ENCODE measurements at regions of chr2 and their contacts with region 1.

Region 1: DNA sequence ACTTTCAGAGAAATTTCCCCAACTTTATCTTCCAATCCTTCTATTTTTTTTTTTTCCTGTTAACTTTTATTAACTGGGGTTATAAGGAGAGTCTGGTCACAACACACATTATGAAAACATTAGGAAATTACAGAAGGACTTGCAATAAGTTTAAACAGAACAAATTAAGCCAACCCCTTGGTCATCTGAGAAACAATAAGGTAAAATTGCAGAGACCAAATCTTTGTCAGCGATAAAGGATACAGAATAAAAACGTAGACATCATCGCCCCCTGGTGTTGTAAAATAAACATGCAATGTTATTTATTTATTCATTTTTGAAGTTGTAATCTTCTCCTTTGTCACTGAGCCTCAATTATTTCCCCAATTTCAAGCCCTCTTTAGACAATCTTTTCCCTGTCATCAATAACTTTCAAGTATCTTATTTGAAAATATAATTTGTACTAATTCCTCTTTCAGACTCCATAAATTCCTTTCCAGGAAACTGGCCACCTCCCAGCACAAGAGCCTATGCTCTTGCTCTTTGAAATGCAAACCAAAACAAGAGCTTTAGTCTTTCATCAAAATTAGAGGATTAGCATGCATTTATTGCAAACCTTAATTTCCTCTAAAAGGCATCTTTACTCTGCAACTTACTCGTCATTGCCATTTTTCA is 19.5 kb downstream of the G6PC2 start:
- DNase-seq: peak; percentile 56
- H3K4me3 Mint-ChIP-seq: no peak overlapping the region
- H3K27ac Mint-ChIP-seq: no peak overlapping the region
- H3K4me1 Mint-ChIP-seq: no peaks in the 10 kb centered on the region
- H3K27me3 Mint-ChIP-seq: peaks cover 61% of the 10 kb centered on the region
- CTCF ChIP-seq: peak; percentile 70

Region 2: GRCh38 chr2:168136392-168136977 is 784.1 kb before region 1 on chr2:
- CTCF ChIA-PET with region 1: interaction called, 7 read pairs
- POLR2A ChIA-PET with region 1: no interaction called
- intact Hi-C with region 1: loop called (anchors 5 kb)
- DNase-seq: peak; percentile 49
- H3K4me3 Mint-ChIP-seq: no peak overlapping the region
- H3K27ac Mint-ChIP-seq: no peak overlapping the region
- H3K4me1 Mint-ChIP-seq: peaks cover 10% of the 10 kb centered on the region
- H3K27me3 Mint-ChIP-seq: no peaks in the 10 kb centered on the region
- CTCF ChIP-seq: peak; percentile 54

Region 3: GRCh38 chr2:168705534-168706470 is 214.8 kb before region 1 on chr2:
- CTCF ChIA-PET with region 1: no interaction called
- POLR2A ChIA-PET with region 1: interaction called, 3 read pairs
- intact Hi-C with region 1: loop called (anchors 10 kb)
- DNase-seq: peak; percentile 43
- H3K4me3 Mint-ChIP-seq: no peak overlapping the region
- H3K27ac Mint-ChIP-seq: peak overlapping the region; percentile 33
- H3K4me1 Mint-ChIP-seq: peaks cover 6% of the 10 kb centered on the region
- H3K27me3 Mint-ChIP-seq: no peaks in the 10 kb centered on the region
- CTCF ChIP-seq: peak; percentile 33

Region 4: DNA sequence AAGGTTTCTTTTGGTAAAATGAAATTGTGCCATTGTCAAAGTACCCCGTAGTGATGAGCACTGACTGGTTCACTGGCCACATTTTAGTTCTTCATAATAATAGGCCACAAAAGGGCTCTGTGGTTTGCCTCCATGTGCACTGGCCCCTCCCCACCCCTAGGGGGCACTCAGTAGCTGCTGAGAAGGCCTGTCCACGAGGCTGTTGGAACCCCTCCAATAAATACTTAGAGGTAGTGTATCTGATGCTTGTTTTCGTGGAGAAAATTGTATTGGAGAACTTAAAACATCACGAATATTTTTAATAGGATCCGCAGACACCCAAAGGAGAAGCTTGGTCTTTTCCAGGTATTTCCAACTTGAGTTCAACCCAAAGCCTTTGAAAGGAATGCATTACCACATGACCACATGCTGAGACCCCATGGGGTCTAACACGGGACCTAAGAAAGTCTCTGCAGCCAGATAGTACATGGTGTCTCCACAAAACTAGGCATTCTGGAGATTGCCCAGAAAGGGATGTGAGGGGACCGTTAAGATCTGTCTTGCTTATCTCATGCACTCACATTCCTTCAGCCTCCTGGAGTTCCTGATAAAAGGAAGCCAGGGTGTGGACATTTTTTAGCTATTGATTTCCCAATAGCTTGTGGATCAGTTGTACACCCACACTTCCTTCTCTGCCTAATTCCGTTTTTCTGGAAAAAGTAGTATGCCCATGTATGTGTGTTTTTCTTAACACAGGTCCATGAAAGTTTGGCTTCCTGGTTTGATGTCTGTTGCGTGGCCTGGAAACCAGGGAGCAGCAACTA is 146.7 kb before region 1 on chr2:
- CTCF ChIA-PET with region 1: interaction called, 15 read pairs
- POLR2A ChIA-PET with region 1: no interaction called
- intact Hi-C with region 1: loop called (anchors 1 kb)
- DNase-seq: peak; percentile 79
- H3K4me3 Mint-ChIP-seq: no peak overlapping the region
- H3K27ac Mint-ChIP-seq: no peak overlapping the region
- H3K4me1 Mint-ChIP-seq: no peaks in the 10 kb centered on the region
- H3K27me3 Mint-ChIP-seq: no peaks in the 10 kb centered on the region
- CTCF ChIP-seq: peak; percentile 72

Region 5: DNA sequence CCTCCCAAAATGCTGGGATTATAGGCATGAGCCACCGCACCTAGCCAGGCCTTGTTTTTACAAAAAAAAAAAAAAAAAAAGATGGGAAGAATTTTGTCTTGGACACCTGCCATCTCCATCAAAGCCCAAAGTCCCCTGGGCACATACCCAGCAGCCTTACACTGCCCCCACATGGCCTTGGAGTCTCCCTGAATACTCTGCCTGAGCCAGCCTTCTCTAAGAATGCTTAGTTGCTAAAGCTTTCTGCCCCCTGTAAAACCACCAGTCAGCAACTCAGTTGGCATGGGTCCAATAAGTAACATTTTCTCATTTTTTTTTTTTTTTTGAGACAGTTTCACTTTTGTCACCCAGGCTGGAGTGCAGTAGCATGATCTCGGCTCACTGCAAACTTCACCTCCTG is 71.0 kb before region 1 on chr2:
- CTCF ChIA-PET with region 1: no interaction called
- POLR2A ChIA-PET with region 1: no interaction called
- intact Hi-C with region 1: no loop called
- DNase-seq: peak; percentile 18
- H3K4me3 Mint-ChIP-seq: no peak overlapping the region
- H3K27ac Mint-ChIP-seq: no peak overlapping the region
- H3K4me1 Mint-ChIP-seq: peaks cover 7% of the 10 kb centered on the region
- H3K27me3 Mint-ChIP-seq: no peaks in the 10 kb centered on the region
- CTCF ChIP-seq: no peak

Region 6: GRCh38 chr2:169038338-169038757 is 117.7 kb after region 1 on chr2:
- CTCF ChIA-PET with region 1: no interaction called
- POLR2A ChIA-PET with region 1: no interaction called
- intact Hi-C with region 1: no loop called
- DNase-seq: peak; percentile 47
- H3K4me3 Mint-ChIP-seq: no peak overlapping the region
- H3K27ac Mint-ChIP-seq: no peak overlapping the region
- H3K4me1 Mint-ChIP-seq: peaks cover 11% of the 10 kb centered on the region
- H3K27me3 Mint-ChIP-seq: no peaks in the 10 kb centered on the region
- CTCF ChIP-seq: no peak

Region 7: DNA sequence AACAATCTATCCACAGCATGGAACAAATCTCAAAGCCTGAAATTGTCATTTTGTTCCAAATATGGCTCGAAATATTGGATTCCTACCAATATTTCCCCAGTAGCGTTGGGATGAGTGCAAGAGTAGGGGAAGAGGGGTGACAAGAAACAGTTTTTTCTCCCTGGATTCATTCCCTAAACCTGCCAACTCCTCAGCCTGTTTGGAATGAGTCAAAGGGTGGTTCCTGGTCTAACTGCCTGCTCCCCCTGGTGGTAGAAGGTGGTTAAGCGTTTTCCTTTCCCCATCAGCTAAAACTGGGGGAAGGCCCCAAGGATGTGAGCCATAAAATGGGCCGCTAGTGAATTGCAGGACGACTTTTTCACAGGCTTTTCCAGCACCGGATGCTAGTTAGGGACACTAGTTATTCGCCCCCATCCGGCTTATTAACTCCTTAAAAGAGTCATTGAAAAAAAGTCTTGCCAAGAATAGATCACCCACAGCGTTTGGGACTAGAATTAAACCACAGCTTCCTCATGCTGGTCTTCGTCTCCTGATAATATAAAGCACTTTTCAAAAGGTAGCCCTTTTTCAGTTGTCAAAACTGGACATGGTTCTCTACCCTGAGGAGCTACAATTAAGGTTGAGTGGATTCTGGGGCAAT is 221.2 kb after region 1 on chr2:
- CTCF ChIA-PET with region 1: no interaction called
- POLR2A ChIA-PET with region 1: no interaction called
- intact Hi-C with region 1: no loop called
- DNase-seq: peak; percentile 83
- H3K4me3 Mint-ChIP-seq: no peak overlapping the region
- H3K27ac Mint-ChIP-seq: no peak overlapping the region
- H3K4me1 Mint-ChIP-seq: peaks cover 6% of the 10 kb centered on the region
- H3K27me3 Mint-ChIP-seq: no peaks in the 10 kb centered on the region
- CTCF ChIP-seq: peak; percentile 76